ENCODE measurements at regions of chr15 and their contacts with region 1.

Region 1: DNA sequence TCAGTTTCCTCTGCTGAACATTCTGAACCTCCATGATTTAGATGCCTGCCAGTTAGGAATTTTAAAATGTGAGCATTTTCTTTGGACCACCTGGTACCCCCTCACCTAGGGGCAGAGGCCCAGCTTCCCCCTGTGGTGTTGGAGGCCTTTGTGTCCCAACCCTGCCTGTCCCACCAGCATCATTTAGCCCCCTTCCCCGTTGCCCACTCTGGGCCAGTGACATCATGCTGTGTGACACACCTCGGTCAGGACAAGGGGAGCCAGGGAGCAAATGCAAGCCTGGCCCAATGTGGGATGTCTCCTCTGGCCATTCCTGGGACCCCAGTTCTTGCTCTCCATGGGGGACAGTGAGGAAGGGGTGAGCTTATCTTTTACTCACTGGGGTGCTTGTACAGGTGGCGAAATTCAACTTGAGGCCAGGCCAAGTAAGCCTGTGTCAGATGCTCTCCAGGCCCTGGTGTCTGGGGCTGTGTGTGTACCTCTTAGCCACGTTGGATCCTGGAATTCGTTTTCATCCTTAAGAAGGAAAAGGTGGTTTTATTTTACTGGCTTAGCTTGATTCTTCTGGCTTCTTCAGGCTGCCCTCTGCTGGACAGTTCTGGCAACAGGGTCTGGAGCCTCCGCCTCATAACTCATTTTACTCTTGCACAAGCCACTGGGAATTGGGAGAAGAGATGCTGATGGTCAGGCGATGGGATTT is 49.7 kb upstream of the MYZAP start:
- DNase-seq: peak; percentile 85 to 88
- H3K4me3 ChIP-seq: no peak overlapping the region
- H3K27ac ChIP-seq: no peak overlapping the region
- H3K4me1 ChIP-seq: peaks cover 0 to 11% (median 8%) of the 10 kb centered on the region in 4 donors
- H3K27me3 ChIP-seq: no peaks in the 10 kb centered on the region
- CTCF ChIP-seq: peak; percentile 69 to 81

Region 2: GRCh38 chr15:57340682-57341259 is 201.2 kb before region 1 on chr15:
- intact Hi-C with region 1: loop called (anchors 5 kb)
- DNase-seq: peak in 1 of 2 donors; percentile 41
- H3K4me3 ChIP-seq: no peak overlapping the region
- H3K27ac ChIP-seq: no peak overlapping the region
- H3K4me1 ChIP-seq: peaks cover 0 to 11% (median 0%) of the 10 kb centered on the region in 4 donors
- H3K27me3 ChIP-seq: peaks cover 0 to 4% of the 10 kb centered on the region in 2 donors
- CTCF ChIP-seq: peak; percentile 84 to 93

Measured in tibial artery (tissue), 4 donors.